CD8-positive, alpha-beta memory T cell (primary cell): ENCODE measurements at regions of chr10 and their contacts with region 1.

Region 1: DNA sequence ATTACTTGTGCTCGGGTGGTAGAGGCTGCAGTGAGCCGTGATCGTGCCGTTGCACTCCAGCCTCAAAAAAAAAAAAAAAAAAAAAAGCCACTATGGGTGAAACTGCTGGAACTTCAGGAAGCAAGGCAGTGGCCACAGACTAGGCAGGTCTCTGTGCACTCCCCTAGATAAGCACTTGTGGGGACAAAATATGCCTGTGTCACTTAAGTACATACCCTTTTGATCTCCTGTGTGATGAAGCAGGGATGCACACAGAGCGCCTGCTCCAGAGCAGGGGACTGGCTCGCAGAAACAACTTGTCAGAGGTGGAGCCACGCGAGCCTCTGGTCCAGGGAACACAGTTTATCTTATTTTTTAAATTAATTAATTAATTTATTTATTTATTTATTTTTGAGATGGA is 42.9 kb upstream of the PSAP start:
- DNase-seq: no peak
- H3K4me3 ChIP-seq: no peak overlapping the region
- H3K4me3 Mint-ChIP-seq: no peak overlapping the region
- H3K27ac ChIP-seq: no peak overlapping the region
- H3K27ac Mint-ChIP-seq: no peak overlapping the region
- H3K4me1 ChIP-seq: peaks cover 5% of the 10 kb centered on the region
- H3K4me1 Mint-ChIP-seq: peaks cover 5 to 6% (median 5%) of the 10 kb centered on the region in 3 donors
- H3K27me3 ChIP-seq: no peaks in the 10 kb centered on the region
- H3K27me3 Mint-ChIP-seq: peaks cover 0 to 30% of the 10 kb centered on the region in 2 donors

Region 2: GRCh38 chr10:71801361-71801760 is 92.6 kb before region 1 on chr10:
- CTCF ChIA-PET with region 1: no interaction called
- POLR2A ChIA-PET with region 1: no interaction called
- DNase-seq: no peak
- H3K4me3 ChIP-seq: no peak overlapping the region
- H3K4me3 Mint-ChIP-seq: no peak overlapping the region
- H3K27ac ChIP-seq: no peak overlapping the region
- H3K27ac Mint-ChIP-seq: no peak overlapping the region
- H3K4me1 ChIP-seq: peaks cover 8% of the 10 kb centered on the region
- H3K4me1 Mint-ChIP-seq: peaks cover 12 to 15% (median 13%) of the 10 kb centered on the region in 3 donors
- H3K27me3 ChIP-seq: no peaks in the 10 kb centered on the region
- H3K27me3 Mint-ChIP-seq: no peaks in the 10 kb centered on the region

Region 3: DNA sequence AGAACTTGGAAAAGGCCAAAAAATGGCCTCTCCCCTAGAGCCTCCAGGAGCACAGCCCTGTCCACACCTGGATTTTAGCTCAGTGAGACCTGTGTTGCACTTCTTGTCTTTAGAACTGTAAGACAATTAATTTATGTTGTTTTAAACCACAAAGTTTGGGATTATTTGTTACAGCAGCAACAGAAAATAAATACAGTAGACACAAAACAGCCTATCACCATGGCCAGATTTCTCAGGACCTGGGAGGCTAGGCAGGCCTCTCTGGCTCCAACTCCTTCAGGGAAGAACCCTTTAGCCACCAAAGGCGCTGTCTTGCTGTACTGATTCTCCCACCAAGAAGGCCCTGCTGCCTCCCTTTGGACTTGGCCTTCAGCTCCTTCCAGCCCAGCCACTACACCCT is 11.2 kb after region 1 on chr10:
- CTCF ChIA-PET with region 1: interaction called, 16 read pairs
- POLR2A ChIA-PET with region 1: no interaction called
- DNase-seq: no peak
- H3K4me3 ChIP-seq: no peak overlapping the region
- H3K4me3 Mint-ChIP-seq: no peak overlapping the region
- H3K27ac ChIP-seq: no peak overlapping the region
- H3K27ac Mint-ChIP-seq: peak overlapping the region in 1 of 8 donors; percentile 43
- H3K4me1 ChIP-seq: peaks cover 6% of the 10 kb centered on the region
- H3K4me1 Mint-ChIP-seq: peaks cover 9 to 10% (median 9%) of the 10 kb centered on the region in 3 donors
- H3K27me3 ChIP-seq: no peaks in the 10 kb centered on the region
- H3K27me3 Mint-ChIP-seq: peaks cover 4 to 8% of the 10 kb centered on the region in 2 donors

Region 4: DNA sequence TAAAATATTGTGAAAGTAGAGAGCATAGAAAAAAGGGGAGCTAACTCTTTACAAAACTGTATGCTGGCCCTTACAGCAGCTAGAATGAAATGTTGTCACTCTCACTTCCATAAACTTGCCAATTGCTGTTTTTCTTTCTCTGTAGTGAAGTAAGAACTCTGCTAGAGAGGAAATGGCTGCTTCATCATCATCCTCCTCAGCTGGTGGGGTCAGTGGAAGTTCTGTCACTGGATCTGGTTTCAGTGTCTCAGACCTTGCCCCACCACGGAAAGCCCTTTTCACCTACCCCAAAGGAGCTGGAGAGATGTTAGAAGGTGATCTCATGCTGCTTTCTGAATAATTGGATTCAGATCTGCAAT is 329.8 kb after region 1 on chr10:
- CTCF ChIA-PET with region 1: interaction called, 4 read pairs
- POLR2A ChIA-PET with region 1: interaction called, 11 read pairs
- DNase-seq: no peak
- H3K4me3 ChIP-seq: no peak overlapping the region
- H3K4me3 Mint-ChIP-seq: peak overlapping the region in 2 of 7 donors; percentile 9 to 40
- H3K27ac ChIP-seq: no peak overlapping the region
- H3K27ac Mint-ChIP-seq: peak overlapping the region in 7 of 8 donors; percentile 18 to 76 (median 38)
- H3K4me1 ChIP-seq: peaks cover 54% of the 10 kb centered on the region
- H3K4me1 Mint-ChIP-seq: peaks cover 42 to 61% (median 47%) of the 10 kb centered on the region in 3 donors
- H3K27me3 ChIP-seq: no peaks in the 10 kb centered on the region
- H3K27me3 Mint-ChIP-seq: no peaks in the 10 kb centered on the region